GM10248 (cell line): ENCODE measurements at regions of chr13 and their contacts with region 1.

Region 1: DNA sequence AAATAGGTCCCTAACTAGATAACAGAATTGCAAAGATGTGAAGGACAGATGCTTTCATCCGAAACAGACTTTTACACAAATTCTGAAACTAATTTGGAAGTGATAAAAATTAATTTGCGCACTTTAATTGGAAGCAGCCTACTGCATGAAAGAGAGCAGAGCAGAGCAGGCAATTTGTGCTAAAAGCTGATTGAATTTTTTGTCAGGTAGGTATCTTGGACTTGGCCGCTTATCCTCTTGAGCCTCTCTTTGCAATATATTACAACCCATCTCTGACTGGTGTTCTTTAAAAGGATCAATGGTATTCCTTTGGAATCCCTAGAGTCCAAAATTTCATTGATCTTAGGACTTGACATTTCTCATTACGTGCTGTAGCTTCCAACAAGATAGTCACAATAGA is 183.3 kb upstream of the MAB21L1 start:
- DNase-seq: no peak
- CTCF ChIP-seq: no peak

Region 2: DNA sequence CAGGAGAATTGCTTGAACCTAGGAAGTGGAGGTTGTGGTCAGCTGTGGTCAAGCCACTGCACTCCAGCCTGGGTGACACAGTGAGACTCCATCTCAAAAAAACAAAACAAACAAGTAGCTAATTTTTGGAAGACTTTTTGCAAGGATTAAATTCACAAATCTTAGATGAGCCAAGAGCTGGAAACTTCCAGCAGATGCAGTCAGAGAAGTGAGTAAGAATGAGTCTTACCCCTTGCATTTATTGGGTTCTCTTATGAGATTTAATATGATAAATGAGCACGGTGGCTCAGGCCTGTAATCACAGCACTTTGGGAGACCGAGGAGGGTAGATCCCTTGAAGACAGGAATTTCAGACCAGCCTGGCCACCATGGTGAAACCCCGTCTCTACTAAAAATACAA is 762.6 kb before region 1 on chr13:
- CTCF ChIA-PET with region 1: no interaction called
- POLR2A ChIA-PET with region 1: no interaction called
- DNase-seq: no peak
- CTCF ChIP-seq: no peak

Region 3: DNA sequence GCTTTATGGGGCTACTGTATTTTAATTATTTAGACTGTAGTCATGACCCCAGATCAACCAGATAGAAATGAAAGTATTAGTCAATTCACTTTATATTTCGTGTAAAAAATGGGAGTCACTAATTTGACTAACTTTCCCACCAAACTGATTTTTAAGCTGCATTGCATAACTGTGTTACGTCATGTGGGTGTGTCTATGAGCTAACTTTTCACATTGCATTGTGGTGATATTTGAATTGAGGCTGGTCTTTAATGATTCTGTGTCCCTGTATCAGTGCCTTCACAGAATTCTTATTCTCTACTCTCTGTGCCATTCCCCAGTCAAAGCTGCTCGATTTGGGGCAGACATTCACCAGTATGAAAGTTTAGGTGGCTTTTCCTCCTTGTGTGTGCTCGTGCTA is 10.6 kb before region 1 on chr13:
- CTCF ChIA-PET with region 1: interaction called, 16 read pairs
- POLR2A ChIA-PET with region 1: no interaction called
- DNase-seq: no peak
- CTCF ChIP-seq: no peak

Region 4: DNA sequence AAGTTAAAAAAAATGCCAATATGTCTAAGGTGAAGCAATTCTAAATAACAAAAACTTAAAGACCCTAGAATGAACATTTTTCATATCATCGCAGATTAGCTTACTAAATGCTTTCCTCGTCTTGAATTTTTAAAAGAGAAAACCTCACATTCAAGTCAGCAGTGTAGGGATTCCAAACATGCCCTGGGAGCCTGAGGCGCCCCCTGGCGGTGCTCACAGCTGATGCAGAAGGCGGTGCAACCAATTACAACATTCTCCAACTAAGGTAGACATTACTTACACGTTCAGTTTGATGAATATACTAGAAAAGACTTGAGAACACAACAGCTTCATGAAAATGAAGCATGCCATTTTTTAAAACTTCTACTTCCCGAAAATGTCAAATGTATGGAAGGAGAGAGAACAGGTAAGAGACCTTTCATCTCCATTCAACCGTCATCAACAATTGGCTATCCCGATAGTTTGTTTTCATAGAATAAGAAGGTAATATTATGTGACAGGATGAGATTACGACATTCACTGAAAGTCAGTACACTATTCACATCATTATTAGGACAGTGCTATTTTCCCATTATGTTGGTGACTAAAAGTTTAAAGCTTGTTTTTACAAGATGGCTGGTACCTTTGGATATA is 166.9 kb after region 1 on chr13:
- CTCF ChIA-PET with region 1: no interaction called
- POLR2A ChIA-PET with region 1: no interaction called
- DNase-seq: no peak
- CTCF ChIP-seq: peak; percentile 5

Region 5: DNA sequence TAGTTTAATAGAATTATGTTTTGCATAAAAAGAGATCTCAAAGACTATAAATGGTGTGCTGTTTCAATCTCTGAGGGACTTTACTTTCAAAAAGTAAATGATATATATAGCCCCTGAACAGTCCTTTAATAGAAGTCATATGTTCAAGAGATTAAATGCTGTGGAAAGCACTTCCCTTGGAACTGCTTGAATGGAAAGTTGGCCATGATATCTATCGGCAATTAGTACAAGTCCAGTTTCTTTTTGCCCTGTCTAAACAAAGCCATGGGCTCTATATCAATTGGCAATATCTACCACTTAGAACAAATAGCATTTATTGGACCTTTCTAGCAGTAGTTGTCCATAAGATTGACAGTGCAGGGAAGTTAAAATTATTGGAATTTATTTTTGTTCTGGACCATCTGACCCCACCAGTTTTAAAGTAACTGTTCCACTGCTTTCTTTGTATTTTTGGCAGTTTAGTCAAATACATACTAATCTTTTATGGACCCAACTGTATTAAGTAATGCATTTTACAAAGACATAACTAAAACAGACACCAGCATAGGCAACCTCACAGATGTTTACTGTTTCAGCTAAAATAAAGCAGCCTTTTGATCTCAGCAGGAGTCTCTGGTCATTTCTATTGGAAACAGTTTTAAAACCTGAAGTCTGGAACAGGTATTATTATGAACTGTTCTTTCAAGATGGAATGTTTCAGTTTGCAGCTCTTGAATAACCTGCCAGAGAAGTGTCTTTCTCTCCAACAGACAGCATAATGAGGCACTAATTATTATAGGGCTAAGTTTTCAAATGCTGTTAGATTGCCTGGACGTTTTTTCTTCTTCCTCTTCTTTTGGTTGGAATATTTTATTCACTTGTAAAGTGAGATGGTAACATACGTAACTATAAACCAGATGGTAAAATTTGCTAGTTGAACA is 188.8 kb after region 1 on chr13:
- CTCF ChIA-PET with region 1: no interaction called
- POLR2A ChIA-PET with region 1: no interaction called
- DNase-seq: no peak
- CTCF ChIP-seq: no peak